ENCODE measurements at regions of chr4 and their contacts with region 1.

Region 1: DNA sequence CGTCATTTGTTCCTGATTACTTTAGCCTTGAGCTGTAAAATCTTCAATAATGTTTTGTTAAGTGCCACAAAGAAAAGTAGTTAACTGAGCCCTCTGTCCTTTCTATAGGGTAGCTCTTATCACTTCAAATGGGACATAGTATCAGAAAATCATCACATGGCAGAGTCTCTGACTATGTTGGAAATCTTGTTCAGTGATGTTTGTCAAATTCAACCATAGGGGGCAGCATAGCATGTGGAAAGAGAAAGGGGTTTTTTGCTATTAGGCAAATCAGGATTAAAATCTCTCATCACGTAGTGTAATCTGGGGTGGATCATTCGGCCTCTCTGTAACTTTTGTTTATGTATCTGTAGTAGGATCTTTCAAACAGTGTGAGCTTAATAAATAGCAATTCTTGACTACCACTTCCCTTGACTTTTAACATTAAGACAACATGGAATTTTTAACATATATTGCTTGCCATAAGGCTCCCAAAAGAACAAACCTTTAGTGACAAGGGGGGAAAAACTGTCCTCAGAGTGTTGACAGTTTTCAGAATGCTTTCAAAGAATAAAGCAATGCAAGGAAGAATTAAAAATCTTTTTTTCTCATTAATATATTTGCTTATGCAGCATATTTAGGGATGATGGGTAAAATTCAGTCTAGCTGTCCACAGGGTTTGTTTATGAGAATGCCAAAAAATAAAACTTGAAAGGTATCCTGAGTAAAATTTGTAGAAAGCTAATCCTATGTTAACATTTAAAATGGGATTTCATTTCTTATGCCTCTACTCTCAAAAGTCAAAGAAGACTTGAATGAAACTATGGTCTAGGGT is 127.2 kb downstream of the FBXW7 start:
- DNase-seq: peak; percentile 37
- ATAC-seq: peak; percentile 56
- H3K4me3 ChIP-seq: no peak overlapping the region
- H3K27ac ChIP-seq: no peak overlapping the region
- H3K4me1 ChIP-seq: peaks cover under 1% of the 10 kb centered on the region; the same call in 1 of the 2 replicates
- H3K27me3 ChIP-seq: no peaks in the 10 kb centered on the region
- CTCF ChIP-seq: peak; percentile 68
- EP300 ChIP-seq: no peak
- POLR2A ChIP-seq: no peak
- RAD21 ChIP-seq: no peak

Region 2: DNA sequence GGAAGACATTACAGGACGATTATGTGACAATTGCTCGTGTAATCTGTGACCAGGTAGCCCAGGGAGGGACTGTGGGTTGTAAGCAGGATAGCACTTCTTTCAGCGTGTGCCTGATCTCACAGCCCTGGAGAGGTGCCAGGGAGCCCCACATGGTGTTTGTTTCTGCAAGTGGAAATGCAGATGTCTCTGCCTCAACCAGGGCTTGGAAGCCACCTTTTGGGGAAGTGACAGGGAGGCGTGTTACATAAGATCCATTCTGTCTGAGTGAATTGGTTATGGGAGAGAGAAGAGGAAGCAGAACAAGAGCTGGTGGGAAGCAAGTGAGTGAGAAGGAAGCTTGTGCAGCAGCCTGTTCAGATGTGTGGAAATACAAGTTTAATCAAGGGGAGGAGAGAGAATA is 543.4 kb before region 1 on chr4:
- CTCF ChIA-PET with region 1: no interaction called
- POLR2A ChIA-PET with region 1: no interaction called
- in situ Hi-C with region 1: no loop called
- intact Hi-C with region 1: no loop called
- DNase-seq: no peak
- ATAC-seq: no peak
- H3K4me3 ChIP-seq: no peak overlapping the region
- H3K27ac ChIP-seq: no peak overlapping the region
- H3K4me1 ChIP-seq: no peaks in the 10 kb centered on the region
- H3K27me3 ChIP-seq: peaks cover 2 to 17% of the 10 kb centered on the region in 2 experiments; a peak in 2 of 5 replicates
- CTCF ChIP-seq: no peak
- EP300 ChIP-seq: no peak
- POLR2A ChIP-seq: no peak
- RAD21 ChIP-seq: no peak

Region 3: DNA sequence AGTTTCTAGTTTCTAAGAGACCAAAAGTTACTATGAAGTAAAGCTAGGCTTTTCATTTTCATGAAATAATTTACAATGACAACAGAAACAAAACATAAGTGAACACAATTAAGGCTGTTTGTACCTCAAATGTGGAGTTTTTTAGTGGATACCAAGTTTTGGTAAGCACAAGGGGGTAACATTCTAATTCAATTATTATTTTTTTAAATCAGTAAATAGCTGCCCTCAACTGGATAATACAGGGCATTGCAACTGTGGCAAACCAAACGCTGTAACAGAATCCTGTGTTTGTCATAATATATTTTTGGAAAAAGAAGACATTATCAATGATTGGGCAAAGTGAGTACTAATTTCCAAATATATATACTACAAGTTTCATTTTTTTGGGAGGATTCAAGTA is 23.2 kb before region 1 on chr4:
- CTCF ChIA-PET with region 1: no interaction called
- POLR2A ChIA-PET with region 1: no interaction called
- in situ Hi-C with region 1: no loop called
- intact Hi-C with region 1: no loop called
- DNase-seq: no peak
- ATAC-seq: no peak
- H3K4me3 ChIP-seq: no peak overlapping the region
- H3K27ac ChIP-seq: no peak overlapping the region
- H3K4me1 ChIP-seq: no peaks in the 10 kb centered on the region
- H3K27me3 ChIP-seq: no peaks in the 10 kb centered on the region
- CTCF ChIP-seq: peak; percentile 24; the same call in 1 of the 2 replicates
- EP300 ChIP-seq: no peak
- POLR2A ChIP-seq: no peak
- RAD21 ChIP-seq: no peak

Region 4: DNA sequence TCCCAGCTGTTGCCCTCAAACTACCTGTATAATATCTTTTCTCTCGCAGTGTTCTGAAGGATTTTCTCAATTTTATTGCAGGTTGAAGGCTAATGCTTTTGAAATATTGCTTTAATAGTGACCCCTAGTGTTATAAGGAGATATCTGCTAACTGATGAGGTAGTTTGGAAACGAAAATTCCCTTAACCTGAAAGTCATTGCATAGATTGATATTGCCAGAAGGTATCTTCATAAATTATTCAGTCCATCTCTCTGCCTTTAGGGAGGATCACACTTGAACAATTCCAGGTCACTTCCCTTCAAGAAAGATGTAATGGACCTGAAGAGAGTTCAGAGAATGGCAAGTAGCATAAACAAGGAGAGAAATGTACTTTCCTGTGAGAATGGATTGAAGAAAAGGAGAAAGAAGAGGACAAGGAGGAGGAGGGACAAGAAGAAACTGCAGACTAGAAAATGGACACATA is 326.7 kb after region 1 on chr4:
- CTCF ChIA-PET with region 1: interaction called, 4 read pairs
- POLR2A ChIA-PET with region 1: no interaction called
- in situ Hi-C with region 1: no loop called
- intact Hi-C with region 1: loop called (anchors 1 kb)
- DNase-seq: no peak
- ATAC-seq: peak; percentile 42; the same call in 2 of the 3 replicates
- H3K4me3 ChIP-seq: no peak overlapping the region
- H3K27ac ChIP-seq: no peak overlapping the region
- H3K4me1 ChIP-seq: no peaks in the 10 kb centered on the region
- H3K27me3 ChIP-seq: peaks cover 0 to 9% of the 10 kb centered on the region in 2 experiments; a peak in 1 of 5 replicates
- CTCF ChIP-seq: peak; percentile 57
- EP300 ChIP-seq: no peak
- POLR2A ChIP-seq: no peak
- RAD21 ChIP-seq: peak; percentile 53; the same call in 1 of the 2 replicates